ENCODE measurements at regions of chr1 and their contacts with region 1.

Region 1: DNA sequence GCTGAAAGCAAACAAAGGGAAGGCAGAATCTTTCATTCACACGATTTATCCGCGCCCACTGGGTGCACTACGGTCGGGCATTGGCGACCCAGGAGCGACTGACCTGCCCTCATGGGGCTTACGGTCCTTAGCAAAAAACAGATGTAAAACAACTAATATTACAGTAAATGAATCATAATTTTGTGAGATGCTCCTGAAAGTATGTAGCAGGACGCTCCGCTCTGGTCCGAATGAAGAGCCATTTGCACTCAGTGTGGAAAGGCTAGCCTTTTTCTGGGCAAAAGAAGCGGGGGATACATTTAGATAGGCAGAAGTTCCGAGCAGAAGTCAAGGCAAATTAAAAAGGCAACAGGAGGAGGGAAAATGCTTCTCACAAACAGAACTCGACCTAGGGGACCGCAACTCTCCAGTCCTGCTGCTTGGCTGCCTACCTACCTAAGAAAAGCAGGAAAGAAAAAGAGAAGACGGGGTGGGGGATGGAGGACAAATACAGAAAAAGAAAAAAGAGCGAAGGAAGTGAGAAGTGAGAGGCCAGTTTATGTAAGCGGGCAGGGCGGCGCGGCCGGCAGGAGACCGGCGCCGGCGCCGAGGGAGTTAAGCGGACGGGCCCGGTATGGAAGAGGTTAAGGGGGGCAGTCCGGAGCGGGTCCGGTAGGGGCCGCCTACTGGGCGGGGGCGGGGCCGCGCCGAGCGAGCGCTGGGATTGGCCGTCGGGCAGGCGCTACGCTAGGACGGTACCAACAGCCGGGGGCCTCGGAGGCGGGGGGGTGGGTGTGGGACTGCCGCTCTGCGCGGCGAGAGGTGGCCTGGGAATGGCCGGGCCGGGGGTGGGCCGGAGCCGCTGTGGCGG is at the start of gene FAM20B:
- DNase-seq: peak; percentile 82 to 94 (median 90)
- ATAC-seq: peak; percentile 85
- H3K4me3 ChIP-seq: peak within 1 kb of the TSS; percentile 70 to 81
- H3K4me3 Mint-ChIP-seq: peak within 1 kb of the TSS; percentile 87
- H3K27ac ChIP-seq: peak within 1 kb of the TSS; percentile 77 to 83
- H3K27ac Mint-ChIP-seq: peak within 1 kb of the TSS; percentile 88
- H3K4me1 ChIP-seq: peaks cover 25% of the 10 kb centered on the region
- H3K4me1 Mint-ChIP-seq: peaks cover 40% of the 10 kb centered on the region
- H3K27me3 ChIP-seq: no peaks in the 10 kb centered on the region
- H3K27me3 Mint-ChIP-seq: no peaks in the 10 kb centered on the region
- CTCF ChIP-seq: no peak
- total RNA-seq, gene FAM20B: 11.1 to 11.2 TPM

Region 2: DNA sequence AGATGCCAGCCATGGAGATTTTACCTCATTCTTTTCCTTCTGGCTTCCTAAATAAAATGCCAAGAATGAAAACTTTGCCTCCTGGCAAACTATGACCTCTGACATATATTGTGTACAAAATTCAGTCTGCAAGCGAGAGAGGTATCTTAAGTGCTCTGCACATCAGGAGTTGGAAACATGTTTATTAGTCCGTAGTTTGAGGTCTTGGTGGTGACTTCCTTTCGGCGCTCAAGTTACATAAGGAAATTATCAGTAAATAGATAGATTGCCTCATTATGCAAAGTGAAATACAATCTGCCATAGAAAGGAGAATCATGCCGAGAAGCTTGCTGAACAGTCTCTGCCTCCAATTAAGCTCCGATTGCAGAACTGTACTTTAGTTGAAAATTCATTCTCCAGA is 1582.9 kb before region 1 on chr1:
- CTCF ChIA-PET with region 1: no interaction called
- POLR2A ChIA-PET with region 1: no interaction called
- intact Hi-C with region 1: no loop called
- DNase-seq: no peak
- ATAC-seq: no peak
- H3K4me3 ChIP-seq: no peak overlapping the region
- H3K4me3 Mint-ChIP-seq: no peak overlapping the region
- H3K27ac ChIP-seq: no peak overlapping the region
- H3K27ac Mint-ChIP-seq: no peak overlapping the region
- H3K4me1 ChIP-seq: no peaks in the 10 kb centered on the region
- H3K4me1 Mint-ChIP-seq: no peaks in the 10 kb centered on the region
- H3K27me3 ChIP-seq: no peaks in the 10 kb centered on the region
- H3K27me3 Mint-ChIP-seq: no peaks in the 10 kb centered on the region
- CTCF ChIP-seq: no peak

Region 3: DNA sequence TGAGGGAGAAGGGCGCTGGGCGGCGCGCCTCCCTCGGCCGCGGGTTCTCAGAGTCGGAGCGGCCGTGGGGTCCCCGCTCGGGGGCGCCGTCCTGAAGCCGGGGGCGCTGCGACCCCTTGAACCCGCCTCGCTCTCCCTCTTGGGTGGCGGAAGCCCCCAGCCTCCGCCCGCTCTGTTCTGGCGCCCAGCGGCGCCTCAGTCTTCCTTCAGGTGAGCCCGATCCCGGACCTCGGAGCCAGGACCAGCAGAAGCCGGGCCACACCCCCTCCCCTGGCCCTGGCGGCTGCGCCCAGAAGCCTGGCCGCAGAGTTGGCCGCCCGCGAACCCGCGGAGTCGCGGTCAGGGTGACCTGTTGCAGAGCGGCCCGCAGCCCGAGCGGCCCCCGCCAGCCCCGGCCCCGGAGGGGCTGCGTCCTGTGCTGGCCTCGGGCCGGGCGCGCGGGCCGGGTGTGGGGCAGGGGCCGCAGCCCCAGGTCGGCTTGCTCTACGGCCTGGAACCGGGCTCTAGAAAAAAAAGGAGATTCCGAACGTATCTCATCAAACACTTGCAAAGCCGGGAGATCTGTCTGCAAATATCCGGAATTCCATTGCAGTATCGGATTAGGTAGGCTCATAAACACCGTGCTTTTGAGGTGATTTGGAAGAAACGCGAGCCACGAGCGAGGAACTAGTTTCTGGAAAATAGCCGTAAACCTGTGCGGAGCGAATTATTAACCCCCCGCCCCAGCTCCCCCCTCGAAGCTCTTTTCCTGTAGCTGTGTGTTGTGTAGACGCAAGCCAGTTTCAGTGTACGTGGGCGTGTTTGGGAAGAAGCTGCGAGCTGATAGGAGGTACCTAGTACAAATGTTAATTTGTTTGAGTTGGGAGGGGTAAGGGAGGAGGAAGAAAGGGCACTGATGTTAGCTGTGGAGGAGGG is 299.5 kb before region 1 on chr1:
- CTCF ChIA-PET with region 1: no interaction called
- POLR2A ChIA-PET with region 1: no interaction called
- intact Hi-C with region 1: loop called (anchors 2 to 5 kb)
- DNase-seq: peak in 8 of 9 experiments; percentile 31 to 85 (median 62)
- ATAC-seq: peak; percentile 81
- H3K4me3 ChIP-seq: peak overlapping the region; percentile 67 to 90
- H3K4me3 Mint-ChIP-seq: peak overlapping the region; percentile 85
- H3K27ac ChIP-seq: peak overlapping the region; percentile 58 to 69
- H3K27ac Mint-ChIP-seq: peak overlapping the region; percentile 75
- H3K4me1 ChIP-seq: peaks cover 10% of the 10 kb centered on the region
- H3K4me1 Mint-ChIP-seq: peaks cover 23% of the 10 kb centered on the region
- H3K27me3 ChIP-seq: no peaks in the 10 kb centered on the region
- H3K27me3 Mint-ChIP-seq: peaks cover 3% of the 10 kb centered on the region
- CTCF ChIP-seq: no peak

Region 4: GRCh38 chr1:178818416-178818815 is 206.9 kb before region 1 on chr1:
- CTCF ChIA-PET with region 1: no interaction called
- POLR2A ChIA-PET with region 1: no interaction called
- intact Hi-C with region 1: no loop called
- DNase-seq: no peak
- ATAC-seq: no peak
- H3K4me3 ChIP-seq: no peak overlapping the region
- H3K4me3 Mint-ChIP-seq: no peak overlapping the region
- H3K27ac ChIP-seq: no peak overlapping the region
- H3K27ac Mint-ChIP-seq: no peak overlapping the region
- H3K4me1 ChIP-seq: no peaks in the 10 kb centered on the region
- H3K4me1 Mint-ChIP-seq: no peaks in the 10 kb centered on the region
- H3K27me3 ChIP-seq: no peaks in the 10 kb centered on the region
- H3K27me3 Mint-ChIP-seq: no peaks in the 10 kb centered on the region
- CTCF ChIP-seq: no peak

Region 5: GRCh38 chr1:179081687-179082332 is 56.5 kb after region 1 on chr1 and contains the start of gene TOR3A:
- CTCF ChIA-PET with region 1: no interaction called
- POLR2A ChIA-PET with region 1: no interaction called
- intact Hi-C with region 1: loop called (anchors 1 to 5 kb)
- DNase-seq: peak; percentile 43 to 87 (median 75)
- ATAC-seq: peak; percentile 47
- H3K4me3 ChIP-seq: peak within 1 kb of the TSS; percentile 62 to 78
- H3K4me3 Mint-ChIP-seq: peak within 1 kb of the TSS; percentile 98
- H3K27ac ChIP-seq: peak within 1 kb of the TSS; percentile 58 to 74
- H3K27ac Mint-ChIP-seq: peak within 1 kb of the TSS; percentile 97
- H3K4me1 ChIP-seq: peaks cover 20% of the 10 kb centered on the region
- H3K4me1 Mint-ChIP-seq: peaks cover 31% of the 10 kb centered on the region
- H3K27me3 ChIP-seq: no peaks in the 10 kb centered on the region
- H3K27me3 Mint-ChIP-seq: no peaks in the 10 kb centered on the region
- CTCF ChIP-seq: no peak
- total RNA-seq, gene TOR3A: 15.6 to 16.0 TPM

Region 6: DNA sequence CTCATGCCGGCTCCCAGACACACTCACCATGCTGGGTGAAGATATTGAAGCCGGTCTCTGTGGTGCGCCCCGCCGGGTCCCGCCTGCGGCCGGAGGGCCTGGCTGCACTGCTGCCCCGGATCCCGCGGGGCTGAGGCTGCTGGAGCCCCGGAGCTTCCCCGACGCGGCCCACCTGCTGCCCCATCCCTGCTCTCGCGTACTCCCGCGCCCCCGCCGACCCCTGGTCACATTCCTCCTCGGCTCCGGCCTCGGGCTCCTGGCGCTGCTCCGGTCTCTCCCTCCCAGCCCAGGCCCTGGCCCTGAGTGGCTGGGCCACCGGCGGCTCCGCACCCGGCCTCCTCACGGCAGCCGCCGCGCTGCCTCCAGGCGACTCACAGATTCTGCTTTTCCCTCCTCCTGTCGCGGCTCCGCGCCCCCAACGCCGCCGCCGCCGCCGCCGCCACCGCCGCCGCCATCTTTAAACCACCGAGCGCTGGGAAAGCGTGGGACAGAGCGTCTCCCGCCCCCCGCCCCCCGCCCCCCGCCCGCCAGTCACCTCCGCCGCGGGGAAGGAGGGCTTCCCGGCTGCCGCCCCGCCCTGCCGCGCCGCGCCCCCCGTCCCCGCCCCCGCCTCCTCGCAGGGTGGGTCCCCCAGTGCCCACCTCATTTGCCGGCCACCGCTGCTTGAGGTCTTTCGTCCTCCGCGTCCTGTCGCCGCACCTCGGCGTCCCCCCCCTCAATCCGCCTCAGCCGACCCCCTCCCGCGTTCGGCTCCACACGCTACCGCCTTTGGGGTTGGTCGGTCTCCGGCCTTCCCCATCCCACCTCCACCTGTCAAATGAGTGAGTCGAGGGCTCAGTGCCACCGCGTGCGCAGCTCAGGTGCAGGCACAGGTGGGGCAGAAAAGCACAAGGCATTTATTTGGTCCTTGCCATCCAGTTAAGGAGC is 204.1 kb after region 1 on chr1 and contains the start of gene ABL2:
- CTCF ChIA-PET with region 1: no interaction called
- POLR2A ChIA-PET with region 1: no interaction called
- intact Hi-C with region 1: loop called in 1 of 2 experiments (anchors 2 kb)
- DNase-seq: peak; percentile 1 to 74 (median 59)
- ATAC-seq: peak; percentile 63
- H3K4me3 ChIP-seq: peak within 1 kb of the TSS; percentile 67
- H3K4me3 Mint-ChIP-seq: peak within 1 kb of the TSS; percentile 90
- H3K27ac ChIP-seq: peak within 1 kb of the TSS; percentile 51 to 53
- H3K27ac Mint-ChIP-seq: peak within 1 kb of the TSS; percentile 91
- H3K4me1 ChIP-seq: peaks cover 14% of the 10 kb centered on the region
- H3K4me1 Mint-ChIP-seq: peaks cover 32% of the 10 kb centered on the region
- H3K27me3 ChIP-seq: no peaks in the 10 kb centered on the region
- H3K27me3 Mint-ChIP-seq: no peaks in the 10 kb centered on the region
- CTCF ChIP-seq: no peak
- total RNA-seq, gene ABL2: 12.4 to 14.6 TPM

Region 7: DNA sequence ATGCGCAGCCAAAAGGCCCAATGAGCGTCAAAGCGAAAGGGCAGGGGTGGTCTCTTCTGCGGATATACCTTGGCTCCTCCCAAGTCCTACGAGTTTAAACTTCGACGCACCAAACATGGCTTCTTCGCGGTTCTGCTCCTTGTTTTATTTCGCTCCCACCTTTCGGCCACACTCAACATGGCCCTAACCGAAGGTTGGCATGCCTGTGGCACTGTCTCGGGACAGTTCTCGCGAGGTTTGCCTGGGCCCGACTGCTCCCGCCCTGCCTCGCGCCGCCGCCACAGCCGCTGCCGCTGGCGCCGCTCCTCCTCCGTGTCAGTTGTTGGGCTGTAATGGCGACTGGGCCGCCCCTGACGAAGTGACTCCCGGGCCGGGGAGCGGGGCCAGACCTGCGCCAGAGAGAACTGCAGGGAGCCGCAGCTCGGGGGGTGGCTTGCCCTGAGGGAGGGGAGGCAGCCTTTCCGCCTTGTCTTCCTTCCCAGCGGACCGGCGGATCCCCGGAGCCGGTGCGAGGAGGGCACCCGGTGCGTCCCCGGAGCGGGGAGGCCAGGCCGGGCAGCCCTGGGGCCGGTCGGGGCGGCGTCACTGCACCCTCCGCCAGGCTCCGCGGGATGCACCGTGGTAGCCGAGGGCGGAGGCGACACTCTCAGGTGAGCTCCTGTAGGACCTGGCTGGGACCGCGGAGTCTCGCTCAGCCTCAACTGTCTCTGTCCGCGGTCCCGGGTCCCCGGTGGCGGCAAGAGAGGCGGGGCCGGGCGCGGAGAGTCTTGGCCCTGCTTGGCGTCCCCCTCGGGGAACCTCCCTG is 929.3 kb after region 1 on chr1 and contains the start of gene CEP350:
- CTCF ChIA-PET with region 1: no interaction called
- POLR2A ChIA-PET with region 1: no interaction called
- intact Hi-C with region 1: loop called in 1 of 2 experiments (anchors 10 kb)
- DNase-seq: peak; percentile 94 to 100 (median 97)
- ATAC-seq: peak; percentile 86
- H3K4me3 ChIP-seq: peak within 1 kb of the TSS; percentile 69 to 85
- H3K4me3 Mint-ChIP-seq: peak within 1 kb of the TSS; percentile 85
- H3K27ac ChIP-seq: peak within 1 kb of the TSS; percentile 77 to 88
- H3K27ac Mint-ChIP-seq: peak within 1 kb of the TSS; percentile 95
- H3K4me1 ChIP-seq: peaks cover 35% of the 10 kb centered on the region
- H3K4me1 Mint-ChIP-seq: peaks cover 59% of the 10 kb centered on the region
- H3K27me3 ChIP-seq: no peaks in the 10 kb centered on the region
- H3K27me3 Mint-ChIP-seq: no peaks in the 10 kb centered on the region
- CTCF ChIP-seq: no peak
- total RNA-seq, gene CEP350: 37.6 to 42.7 TPM

Region 8: DNA sequence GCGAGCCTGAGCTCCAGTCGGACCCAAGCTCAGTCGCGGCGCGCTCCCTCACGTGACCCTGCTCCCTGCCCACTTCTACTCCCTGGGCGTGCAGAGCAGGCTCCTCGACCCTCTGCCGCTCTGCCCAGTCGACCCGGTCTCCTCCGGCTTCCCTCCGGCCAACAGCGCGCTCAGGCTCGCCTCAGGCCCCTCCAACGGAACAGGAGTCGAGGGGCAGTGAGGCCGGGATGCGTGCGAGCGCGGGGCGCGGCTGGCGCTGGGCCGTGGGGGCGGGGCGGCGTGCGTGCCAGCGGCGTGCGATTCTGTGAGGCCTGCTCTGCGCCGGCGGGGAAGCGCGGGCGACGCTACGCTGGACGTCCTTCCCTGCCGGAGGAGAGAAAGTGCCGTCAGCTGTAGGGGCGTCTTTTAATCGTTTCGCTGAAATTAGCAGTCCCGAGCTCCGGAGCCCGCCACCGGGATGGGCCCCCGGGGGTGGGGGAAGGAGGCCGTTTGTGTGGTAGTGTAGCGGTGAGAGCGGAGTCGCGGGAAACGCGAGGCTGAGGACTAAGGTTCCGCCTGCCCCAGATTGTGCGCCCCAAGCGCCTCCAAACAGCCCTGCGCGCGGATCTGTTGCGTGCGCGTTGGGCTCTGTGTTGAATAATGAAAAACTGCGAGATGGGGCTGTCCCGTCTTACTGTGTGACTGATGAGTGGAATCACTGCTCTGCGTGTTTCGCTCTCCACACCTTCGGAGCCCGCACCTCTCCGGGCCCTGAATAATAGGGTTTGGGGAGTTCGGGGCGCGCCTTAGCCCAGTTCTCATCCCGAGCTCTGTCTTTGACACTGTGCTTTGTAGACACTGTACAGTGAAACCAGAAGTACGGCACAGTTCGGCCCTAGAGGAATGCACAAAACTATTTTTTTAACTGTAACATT is 1477.3 kb after region 1 on chr1 and contains the start of gene ACBD6:
- CTCF ChIA-PET with region 1: no interaction called
- POLR2A ChIA-PET with region 1: no interaction called
- intact Hi-C with region 1: loop called in 1 of 2 experiments (anchors 10 kb)
- DNase-seq: peak; percentile 73 to 92 (median 84)
- ATAC-seq: peak; percentile 89
- H3K4me3 ChIP-seq: peak within 1 kb of the TSS; percentile 96 to 97
- H3K4me3 Mint-ChIP-seq: peak within 1 kb of the TSS; percentile 96
- H3K27ac ChIP-seq: peak within 1 kb of the TSS; percentile 75 to 76
- H3K27ac Mint-ChIP-seq: peak within 1 kb of the TSS; percentile 98
- H3K4me1 ChIP-seq: peaks cover 27% of the 10 kb centered on the region
- H3K4me1 Mint-ChIP-seq: peaks cover 47% of the 10 kb centered on the region
- H3K27me3 ChIP-seq: no peaks in the 10 kb centered on the region
- H3K27me3 Mint-ChIP-seq: no peaks in the 10 kb centered on the region
- CTCF ChIP-seq: no peak
- total RNA-seq, gene ACBD6: 23.4 to 24.6 TPM

Measured in CD8-positive, alpha-beta T cell (primary cell).